Activated T-helper 1 cell treated with anti-CD3 and anti-CD28 coated beads, Interleukin-12 subunit alpha, Interleukin-12 subunit beta, Interleukin-2, Interleukin-4 antibody, amounts not matched to agents 30 ng/mL and 10 ng/mL and 1 ng/mL, durations not matched to agents 14 hours and 24 hours and 36 hours (primary cell): ENCODE measurements at regions of chr6 and their contacts with region 1.

Region 1: GRCh38 chr6:38671885-38672467 is 31.0 kb downstream of the GLO1 start:
- DNase-seq: peak; percentile 16
- H3K4me3 Mint-ChIP-seq: no peak overlapping the region
- H3K27ac Mint-ChIP-seq: peak overlapping the region; percentile 55
- H3K4me1 Mint-ChIP-seq: peaks cover 39% of the 10 kb centered on the region
- H3K27me3 Mint-ChIP-seq: no peaks in the 10 kb centered on the region

Region 2: DNA sequence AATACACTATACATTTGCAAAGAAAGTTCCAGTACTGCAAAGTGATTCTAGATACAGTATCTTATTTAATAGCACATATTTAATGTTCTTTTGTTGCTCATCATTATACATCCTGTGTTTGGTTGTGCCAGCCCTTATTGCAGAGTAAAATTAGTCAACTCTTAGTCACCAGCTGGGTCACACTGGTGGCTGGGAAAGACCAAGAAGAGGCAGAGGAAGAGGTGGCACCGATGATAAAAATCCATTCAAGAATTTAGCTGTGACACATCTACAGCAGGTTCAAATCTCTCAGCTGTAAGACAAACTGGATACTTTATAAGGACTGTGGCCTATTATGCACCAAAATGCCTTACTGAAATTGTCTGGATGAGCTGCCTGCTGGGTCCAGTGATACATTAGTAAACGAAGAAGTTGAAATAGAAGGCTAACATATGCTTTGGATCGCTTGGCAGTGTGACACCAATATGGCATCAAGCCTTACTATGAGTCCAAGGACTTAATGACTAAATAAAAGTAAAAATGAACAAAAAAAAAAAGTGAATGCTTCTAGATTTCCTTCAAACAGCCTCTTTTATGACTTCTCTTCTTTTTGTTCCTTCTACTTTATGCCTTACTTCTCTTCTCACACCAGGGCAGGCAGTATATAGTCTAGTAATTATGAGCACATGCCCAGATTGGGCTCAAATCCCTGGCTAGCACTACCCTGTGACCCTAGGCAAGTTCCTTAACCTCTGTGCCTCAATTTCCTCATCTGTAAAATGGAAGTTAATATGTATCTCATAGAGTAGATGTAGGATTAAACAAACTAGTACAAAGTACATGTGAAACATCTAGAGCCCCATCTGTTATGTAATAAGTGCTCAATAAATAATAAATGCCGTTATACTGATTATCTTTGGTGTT is 1347.6 kb before region 1 on chr6:
- intact Hi-C with region 1: loop called (anchors 5 kb)
- DNase-seq: no peak
- H3K4me3 Mint-ChIP-seq: no peak overlapping the region
- H3K27ac Mint-ChIP-seq: peak overlapping the region; percentile 64
- H3K4me1 Mint-ChIP-seq: peaks cover 19% of the 10 kb centered on the region
- H3K27me3 Mint-ChIP-seq: no peaks in the 10 kb centered on the region

Region 3: GRCh38 chr6:37980222-37980595 is 691.8 kb before region 1 on chr6:
- intact Hi-C with region 1: no loop called
- DNase-seq: no peak
- H3K4me3 Mint-ChIP-seq: no peak overlapping the region
- H3K27ac Mint-ChIP-seq: no peak overlapping the region
- H3K4me1 Mint-ChIP-seq: peaks cover 47% of the 10 kb centered on the region
- H3K27me3 Mint-ChIP-seq: no peaks in the 10 kb centered on the region

Region 4: GRCh38 chr6:38493931-38494547 is 177.9 kb before region 1 on chr6:
- intact Hi-C with region 1: loop called (anchors 2 kb)
- DNase-seq: peak; percentile 54
- H3K4me3 Mint-ChIP-seq: no peak overlapping the region
- H3K27ac Mint-ChIP-seq: no peak overlapping the region
- H3K4me1 Mint-ChIP-seq: peaks cover 4% of the 10 kb centered on the region
- H3K27me3 Mint-ChIP-seq: no peaks in the 10 kb centered on the region

Region 5: DNA sequence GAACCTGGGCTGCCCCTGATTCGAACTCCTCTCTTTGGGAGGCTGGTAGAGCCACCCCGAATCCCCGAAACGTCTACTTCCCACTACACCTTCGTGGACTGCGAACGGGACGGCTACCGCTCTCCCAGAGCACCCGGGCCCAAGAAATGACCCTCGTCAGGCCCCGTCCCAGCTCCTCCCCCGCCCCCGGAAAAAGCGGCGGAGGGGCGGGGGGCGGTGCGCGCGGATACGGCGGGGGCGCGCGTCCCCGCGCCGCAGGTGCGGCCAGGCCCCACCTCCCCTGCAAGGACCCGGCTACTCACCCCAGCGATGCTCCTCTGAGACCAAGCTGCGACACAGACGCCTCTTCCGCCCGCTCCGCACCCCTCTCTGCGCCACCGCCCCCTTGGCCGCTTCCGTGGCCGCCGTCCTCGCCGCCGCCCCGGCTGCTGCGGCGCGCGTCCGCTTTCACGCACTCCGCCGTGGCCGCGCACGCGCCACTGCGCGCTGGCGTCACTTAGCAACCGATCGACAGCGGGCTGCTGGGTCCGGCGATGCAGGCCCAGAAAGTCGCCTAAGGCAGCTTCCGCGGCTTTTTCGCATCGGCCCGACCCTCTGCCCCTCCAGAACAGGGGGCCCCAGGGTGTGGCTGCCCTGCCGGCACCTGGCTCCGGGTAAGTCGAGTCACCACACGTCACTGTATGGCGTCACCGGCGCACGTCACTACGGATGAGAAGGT is 32.3 kb before region 1 on chr6 and contains the start of gene BTBD9:
- intact Hi-C with region 1: loop called (anchors 1 kb)
- DNase-seq: peak; percentile 80
- H3K4me3 Mint-ChIP-seq: peak within 1 kb of the TSS; percentile 92
- H3K27ac Mint-ChIP-seq: peak within 1 kb of the TSS; percentile 91
- H3K4me1 Mint-ChIP-seq: peaks cover 47% of the 10 kb centered on the region
- H3K27me3 Mint-ChIP-seq: no peaks in the 10 kb centered on the region
- total RNA-seq, gene BTBD9: 14.5 and 16.4 TPM in 2 replicates

Region 6: GRCh38 chr6:38713812-38714211 is 41.8 kb after region 1 on chr6:
- intact Hi-C with region 1: loop called (anchors 1 kb)
- DNase-seq: peak; percentile 75
- H3K4me3 Mint-ChIP-seq: peak overlapping the region; percentile 65
- H3K27ac Mint-ChIP-seq: peak overlapping the region; percentile 76
- H3K4me1 Mint-ChIP-seq: peaks cover 42% of the 10 kb centered on the region
- H3K27me3 Mint-ChIP-seq: peaks cover 5% of the 10 kb centered on the region